PC-9 (cell line): ENCODE measurements at regions of chr3 and their contacts with region 1.

Region 1: DNA sequence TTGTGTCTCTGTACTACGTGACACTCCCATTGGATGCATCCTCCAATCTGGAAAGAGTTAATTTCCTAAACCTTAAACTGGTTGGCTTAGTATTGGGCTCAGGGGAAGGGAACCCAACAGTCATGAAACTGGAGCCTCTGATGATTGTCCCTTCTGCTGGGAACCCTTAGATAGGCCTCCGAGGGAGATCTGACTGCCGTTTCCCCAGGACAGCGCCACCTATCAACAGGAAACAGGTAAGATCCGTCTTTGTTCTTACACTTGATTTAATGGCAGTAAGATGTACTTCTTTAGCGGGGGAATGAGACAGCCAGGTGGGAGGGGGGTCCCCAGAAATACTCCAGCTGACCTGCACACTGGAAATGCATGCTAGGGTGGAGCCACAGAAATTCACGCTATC is 1749.6 kb downstream of the SI start:
- DNase-seq: no peak
- H3K4me3 ChIP-seq: no peak overlapping the region
- H3K27ac ChIP-seq: no peak overlapping the region
- H3K4me1 ChIP-seq: no peaks in the 10 kb centered on the region
- H3K27me3 ChIP-seq: no peaks in the 10 kb centered on the region
- CTCF ChIP-seq: peak; percentile 29; the same call in 1 of the 2 replicates

Region 2: GRCh38 chr3:162525066-162525742 is 803.5 kb before region 1 on chr3:
- CTCF ChIA-PET with region 1: interaction called, 10 read pairs
- POLR2A ChIA-PET with region 1: no interaction called
- intact Hi-C with region 1: no loop called
- DNase-seq: no peak
- H3K4me3 ChIP-seq: no peak overlapping the region
- H3K27ac ChIP-seq: no peak overlapping the region
- H3K4me1 ChIP-seq: no peaks in the 10 kb centered on the region
- H3K27me3 ChIP-seq: no peaks in the 10 kb centered on the region
- CTCF ChIP-seq: no peak